Activated CD4-positive, alpha-beta T cell treated with anti-CD3 and anti-CD28 coated beads for 36 hours (primary cell): ENCODE measurements at regions of chr5 and their contacts with region 1.

Region 1: GRCh38 chr5:174418928-174419796 is 305.2 kb upstream of the MSX2 start:
- DNase-seq: peak; percentile 93
- ATAC-seq: peak; percentile 84
- H3K4me3 Mint-ChIP-seq: peak overlapping the region; percentile 42
- H3K27ac Mint-ChIP-seq: peak overlapping the region; percentile 19
- H3K4me1 Mint-ChIP-seq: peaks cover 13% of the 10 kb centered on the region
- H3K27me3 Mint-ChIP-seq: peaks cover 19% of the 10 kb centered on the region

Region 2: DNA sequence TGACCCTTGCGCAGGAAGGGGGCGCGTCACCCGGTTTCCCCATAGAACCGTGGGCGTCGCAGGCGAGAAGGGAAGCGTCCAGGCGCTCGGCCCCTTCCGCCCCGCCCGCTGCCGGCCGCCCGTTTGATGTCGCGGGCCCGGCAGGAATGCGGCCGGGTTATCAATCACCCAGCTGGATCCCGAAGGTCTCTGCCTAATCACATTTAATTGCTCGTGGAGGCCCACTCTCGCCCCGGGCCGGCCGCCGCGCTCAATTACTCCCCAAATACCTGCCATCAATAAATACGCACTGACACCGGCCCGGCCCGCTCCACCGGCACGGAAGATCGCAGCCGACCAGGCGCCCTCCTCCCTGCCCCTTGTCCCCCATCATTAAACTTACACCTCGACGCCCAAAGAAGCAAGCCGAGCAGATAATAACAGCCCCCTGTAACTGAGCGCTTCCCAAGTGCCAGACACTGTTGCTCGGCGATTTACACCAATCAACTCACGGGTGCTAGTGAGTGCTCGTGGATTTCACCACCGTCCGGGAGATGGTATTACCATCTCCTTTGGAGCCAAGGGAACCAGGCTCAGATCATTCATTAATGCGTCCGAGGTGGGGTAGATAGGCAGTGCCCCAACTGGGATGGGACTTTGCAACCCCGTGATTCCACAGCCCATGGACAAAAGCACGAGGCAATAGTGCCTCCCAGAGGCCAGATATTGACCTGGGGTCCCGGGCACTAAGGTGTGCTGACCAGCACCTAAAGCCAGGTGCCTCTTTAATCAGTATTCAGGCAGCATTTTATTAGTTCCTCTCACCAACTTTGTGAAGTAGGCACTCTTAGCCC is 316.6 kb after region 1 on chr5:
- CTCF ChIA-PET with region 1: interaction called, 5 read pairs
- POLR2A ChIA-PET with region 1: no interaction called
- intact Hi-C with region 1: loop called (anchors 1 kb)
- DNase-seq: peak; percentile 42
- ATAC-seq: no peak
- H3K4me3 Mint-ChIP-seq: no peak overlapping the region
- H3K27ac Mint-ChIP-seq: no peak overlapping the region
- H3K4me1 Mint-ChIP-seq: peaks cover 4% of the 10 kb centered on the region
- H3K27me3 Mint-ChIP-seq: peaks cover 72% of the 10 kb centered on the region

Region 3: DNA sequence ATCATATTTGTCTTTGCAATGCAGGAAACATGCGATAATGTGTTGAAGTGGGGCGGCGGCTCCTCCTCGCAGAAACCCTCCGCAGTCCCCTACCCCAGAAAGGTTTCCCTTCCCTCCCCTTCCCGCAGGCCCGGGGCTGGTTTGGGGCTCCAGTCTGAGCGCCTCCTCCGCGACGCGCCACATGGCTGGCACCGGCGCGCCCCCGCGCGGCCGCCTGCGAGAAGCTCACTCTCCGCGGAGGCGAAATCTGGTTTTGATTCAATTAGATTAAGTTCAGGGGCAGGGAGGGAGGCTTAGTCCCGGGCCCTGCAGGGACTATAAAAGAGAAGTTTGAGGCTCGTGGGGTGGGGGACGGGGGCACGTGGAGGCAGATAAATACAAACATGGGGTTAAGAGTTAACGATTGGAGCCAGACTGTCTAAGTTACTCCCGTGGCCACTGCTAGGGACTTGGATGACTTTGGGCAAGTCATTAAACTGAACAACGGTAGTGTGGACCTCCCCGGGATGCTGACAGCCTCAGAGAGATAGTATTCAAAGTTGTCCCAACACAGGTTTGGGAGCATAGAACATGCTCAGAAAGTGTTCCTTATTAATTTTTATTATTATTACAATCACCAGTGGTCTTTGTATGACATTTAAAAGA is 374.6 kb after region 1 on chr5:
- CTCF ChIA-PET with region 1: interaction called, 30 read pairs
- POLR2A ChIA-PET with region 1: no interaction called
- intact Hi-C with region 1: loop called (anchors 1 kb)
- DNase-seq: peak; percentile 74
- ATAC-seq: peak; percentile 64
- H3K4me3 Mint-ChIP-seq: no peak overlapping the region
- H3K27ac Mint-ChIP-seq: no peak overlapping the region
- H3K4me1 Mint-ChIP-seq: no peaks in the 10 kb centered on the region
- H3K27me3 Mint-ChIP-seq: peaks cover 26% of the 10 kb centered on the region

Region 4: DNA sequence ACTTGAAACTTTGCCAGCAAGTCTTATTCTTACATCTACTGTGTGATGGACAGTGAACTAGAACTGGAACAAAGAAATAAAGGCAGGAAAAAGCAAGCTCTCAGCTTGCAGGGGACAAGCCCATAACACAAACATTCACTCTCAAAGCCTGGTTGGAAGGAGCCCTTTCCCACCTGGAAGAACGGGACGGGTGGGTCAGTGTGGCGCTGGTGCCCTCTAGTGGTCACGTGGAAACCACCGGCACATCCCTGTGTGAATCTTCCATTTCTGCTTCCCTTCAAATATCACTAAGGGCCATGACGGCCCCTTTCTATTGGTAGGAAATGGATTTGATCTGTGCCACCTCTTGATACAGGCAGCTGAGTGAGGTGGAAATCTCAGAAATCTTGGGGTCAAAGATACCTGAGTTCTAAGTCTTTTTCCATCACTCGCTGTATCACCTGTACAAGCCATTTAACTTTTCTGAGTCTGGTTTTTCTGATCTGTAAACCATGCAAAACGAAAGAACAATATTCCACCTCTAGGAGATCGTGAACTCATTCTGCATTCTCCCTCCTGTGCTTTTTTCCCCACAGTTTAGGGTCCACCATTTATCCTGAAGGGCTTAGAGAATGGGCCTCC is 516.8 kb after region 1 on chr5:
- CTCF ChIA-PET with region 1: interaction called, 5 read pairs
- POLR2A ChIA-PET with region 1: no interaction called
- intact Hi-C with region 1: loop called (anchors 1 to 2 kb)
- DNase-seq: peak; percentile 60
- ATAC-seq: no peak
- H3K4me3 Mint-ChIP-seq: no peak overlapping the region
- H3K27ac Mint-ChIP-seq: no peak overlapping the region
- H3K4me1 Mint-ChIP-seq: no peaks in the 10 kb centered on the region
- H3K27me3 Mint-ChIP-seq: peaks cover 21% of the 10 kb centered on the region